ENCODE measurements at regions of chr17 and their contacts with region 1.

Region 1: GRCh38 chr17:30104575-30105339 is 11.9 kb upstream of the NSRP1 start:
- DNase-seq: peak; percentile 76
- ATAC-seq: peak; percentile 99
- H3K4me3 ChIP-seq: peak overlapping the region; percentile 47 to 57
- H3K27ac ChIP-seq: no peak overlapping the region
- H3K4me1 ChIP-seq: peaks cover 3 to 7% of the 10 kb centered on the region in 2 experiments; a peak in 2 of 4 replicates
- H3K27me3 ChIP-seq: no peaks in the 10 kb centered on the region
- CTCF ChIP-seq: peak; percentile 88 to 96 (median 93); a peak in 5 of 6 replicates
- POLR2A ChIP-seq: no peak
- RAD21 ChIP-seq: peak; percentile 90

Region 2: DNA sequence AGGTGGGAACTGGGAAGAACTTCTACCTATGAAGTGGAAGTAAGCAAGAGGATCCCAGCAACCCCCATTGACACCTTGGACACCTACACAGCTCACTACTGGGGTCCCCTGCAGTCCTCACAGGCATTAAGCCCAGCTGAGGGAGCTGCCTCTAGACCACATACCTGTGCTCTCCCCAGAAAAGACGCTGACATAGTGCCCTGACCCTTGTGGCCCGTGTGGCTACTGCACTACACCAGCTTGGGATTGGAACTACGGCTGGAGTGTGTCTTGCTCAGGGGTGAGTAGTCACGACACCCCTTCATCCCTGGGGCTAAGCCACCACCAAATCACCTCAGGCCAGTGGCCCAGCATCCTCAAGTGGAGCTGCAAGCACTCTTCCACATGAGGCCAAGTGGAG is 42.4 kb before region 1 on chr17:
- CTCF ChIA-PET with region 1: no interaction called
- POLR2A ChIA-PET with region 1: no interaction called
- RAD21 ChIA-PET with region 1: no interaction called
- intact Hi-C with region 1: no loop called
- DNase-seq: no peak
- ATAC-seq: no peak
- H3K4me3 ChIP-seq: no peak overlapping the region
- H3K27ac ChIP-seq: no peak overlapping the region
- H3K4me1 ChIP-seq: no peaks in the 10 kb centered on the region
- H3K27me3 ChIP-seq: no peaks in the 10 kb centered on the region
- CTCF ChIP-seq: no peak
- POLR2A ChIP-seq: no peak
- RAD21 ChIP-seq: no peak

Region 3: GRCh38 chr17:30093463-30094147 is 11.2 kb before region 1 on chr17:
- CTCF ChIA-PET with region 1: interaction called, 42 read pairs
- POLR2A ChIA-PET with region 1: interaction called, 4 read pairs
- RAD21 ChIA-PET with region 1: no interaction called
- intact Hi-C with region 1: no loop called
- DNase-seq: peak; percentile 54
- ATAC-seq: peak; percentile 86
- H3K4me3 ChIP-seq: no peak overlapping the region
- H3K27ac ChIP-seq: no peak overlapping the region
- H3K4me1 ChIP-seq: peaks cover 0 to 32% of the 10 kb centered on the region in 2 experiments; a peak in 2 of 4 replicates
- H3K27me3 ChIP-seq: no peaks in the 10 kb centered on the region
- CTCF ChIP-seq: peak; percentile 62 to 91 (median 85)
- POLR2A ChIP-seq: no peak
- RAD21 ChIP-seq: peak; percentile 93

Region 4: DNA sequence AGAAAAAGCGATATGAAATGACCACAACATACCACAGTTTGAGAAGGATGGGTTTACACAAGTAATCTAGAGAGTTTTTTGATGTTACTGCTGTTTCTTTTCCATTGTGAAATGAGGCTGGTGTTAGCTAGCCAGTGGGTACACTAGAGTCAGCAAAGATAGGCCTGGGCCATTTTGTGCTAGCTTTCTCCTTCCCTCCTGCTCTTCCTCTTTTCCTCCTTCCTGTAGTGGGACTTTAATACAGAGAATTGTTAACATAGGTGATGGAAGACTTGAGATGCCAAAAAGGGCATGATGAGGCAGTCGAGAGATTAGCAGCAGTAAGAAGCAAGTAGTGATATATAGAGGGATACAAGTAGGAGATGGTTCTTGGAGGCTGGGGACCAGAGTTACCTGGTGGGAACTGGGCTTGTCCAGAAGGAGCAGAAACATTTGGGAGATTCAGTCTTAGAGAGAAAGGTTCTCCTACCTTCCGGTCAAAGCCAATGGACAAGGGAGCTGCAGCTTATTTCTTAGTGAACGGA is 19.6 kb after region 1 on chr17:
- CTCF ChIA-PET with region 1: interaction called, 19 read pairs
- POLR2A ChIA-PET with region 1: no interaction called
- RAD21 ChIA-PET with region 1: interaction called in 1 of 2 experiments, 6 read pairs
- intact Hi-C with region 1: no loop called
- DNase-seq: no peak
- ATAC-seq: no peak
- H3K4me3 ChIP-seq: no peak overlapping the region
- H3K27ac ChIP-seq: no peak overlapping the region; the same call in 1 of the 2 replicates
- H3K4me1 ChIP-seq: no peaks in the 10 kb centered on the region
- H3K27me3 ChIP-seq: no peaks in the 10 kb centered on the region
- CTCF ChIP-seq: no peak
- POLR2A ChIP-seq: no peak
- RAD21 ChIP-seq: no peak

Region 5: DNA sequence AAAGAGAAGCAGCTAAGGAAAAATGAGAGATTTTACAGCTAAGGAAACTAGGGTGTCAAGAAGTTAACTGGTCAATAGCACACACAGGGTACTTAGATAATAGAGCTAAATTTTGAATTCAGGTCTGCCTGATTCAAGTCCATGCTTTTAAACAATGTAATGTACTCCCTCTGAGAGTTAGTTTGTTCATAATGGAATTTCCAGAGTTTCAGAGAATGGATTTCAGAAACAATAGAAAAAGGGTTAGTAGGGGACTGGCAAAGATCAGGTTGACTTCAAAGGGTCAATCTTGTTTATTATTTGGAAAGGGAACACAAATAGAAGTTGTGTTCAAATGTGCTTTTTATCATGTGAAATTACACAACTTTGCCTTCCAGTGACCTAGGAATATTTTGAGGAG is 29.8 kb after region 1 on chr17:
- CTCF ChIA-PET with region 1: no interaction called
- POLR2A ChIA-PET with region 1: no interaction called
- RAD21 ChIA-PET with region 1: no interaction called
- intact Hi-C with region 1: no loop called
- DNase-seq: no peak
- ATAC-seq: no peak
- H3K4me3 ChIP-seq: no peak overlapping the region
- H3K27ac ChIP-seq: no peak overlapping the region
- H3K4me1 ChIP-seq: no peaks in the 10 kb centered on the region
- H3K27me3 ChIP-seq: no peaks in the 10 kb centered on the region
- CTCF ChIP-seq: no peak
- POLR2A ChIP-seq: no peak
- RAD21 ChIP-seq: no peak

Region 6: DNA sequence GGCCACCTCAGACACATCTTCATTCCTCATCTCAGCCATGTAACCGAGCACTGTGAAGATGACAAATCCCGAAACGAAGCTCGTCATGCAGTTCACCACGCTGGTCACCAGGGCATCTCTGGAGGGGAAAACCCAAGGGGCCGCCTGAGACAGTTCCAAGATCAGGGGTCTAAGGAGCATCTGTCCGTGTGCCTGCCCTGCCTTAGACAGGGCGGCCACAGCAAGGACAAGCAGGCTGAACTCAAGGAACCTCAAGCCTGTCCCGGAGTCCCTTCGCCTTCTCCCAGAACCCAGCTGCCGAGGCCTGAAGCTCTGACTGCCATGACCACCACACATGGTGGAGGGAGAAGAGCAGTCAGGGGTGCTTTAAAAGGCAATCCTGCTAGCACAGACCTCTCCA is 108.0 kb after region 1 on chr17:
- CTCF ChIA-PET with region 1: no interaction called
- POLR2A ChIA-PET with region 1: no interaction called
- RAD21 ChIA-PET with region 1: no interaction called
- intact Hi-C with region 1: no loop called
- DNase-seq: no peak
- ATAC-seq: peak; percentile 46; the same call in 1 of the 2 replicates
- H3K4me3 ChIP-seq: no peak overlapping the region
- H3K27ac ChIP-seq: no peak overlapping the region
- H3K4me1 ChIP-seq: no peaks in the 10 kb centered on the region
- H3K27me3 ChIP-seq: no peaks in the 10 kb centered on the region
- CTCF ChIP-seq: no peak; a peak in 1 of 6 replicates
- POLR2A ChIP-seq: no peak
- RAD21 ChIP-seq: no peak

Region 7: DNA sequence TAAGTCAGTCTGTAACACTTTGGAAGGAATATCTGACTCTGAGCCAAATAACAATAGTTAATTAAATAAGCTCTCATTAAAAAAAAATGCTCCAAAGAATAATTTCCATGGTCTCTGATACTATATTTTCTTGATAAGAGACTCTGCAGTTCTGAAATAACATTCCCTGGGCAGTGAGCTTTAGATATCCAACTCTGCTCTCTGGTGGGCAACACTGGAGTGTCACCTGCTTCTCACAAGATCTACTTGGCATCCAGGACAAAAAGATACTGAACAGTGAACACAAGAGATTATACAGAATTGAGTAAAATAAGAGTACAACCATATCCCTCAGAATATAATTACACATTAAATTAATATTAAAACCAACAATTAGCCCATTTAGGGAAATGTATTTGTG is 173.3 kb after region 1 on chr17:
- CTCF ChIA-PET with region 1: interaction called, 22 read pairs
- POLR2A ChIA-PET with region 1: interaction called, 4 read pairs
- RAD21 ChIA-PET with region 1: interaction called, 4 read pairs
- intact Hi-C with region 1: loop called (anchors 1 kb)
- DNase-seq: no peak
- ATAC-seq: peak; percentile 58; the same call in 1 of the 2 replicates
- H3K4me3 ChIP-seq: no peak overlapping the region
- H3K27ac ChIP-seq: no peak overlapping the region
- H3K4me1 ChIP-seq: no peaks in the 10 kb centered on the region
- H3K27me3 ChIP-seq: no peaks in the 10 kb centered on the region
- CTCF ChIP-seq: peak; percentile 27 to 49 (median 40); a peak in 3 of 6 replicates
- POLR2A ChIP-seq: no peak
- RAD21 ChIP-seq: peak; percentile 51

Region 8: GRCh38 chr17:30554839-30555751 is 450.3 kb after region 1 on chr17:
- CTCF ChIA-PET with region 1: no interaction called
- POLR2A ChIA-PET with region 1: no interaction called
- RAD21 ChIA-PET with region 1: no interaction called
- intact Hi-C with region 1: loop called (anchors 5 kb)
- DNase-seq: peak; percentile 10
- ATAC-seq: peak; percentile 78
- H3K4me3 ChIP-seq: no peak overlapping the region
- H3K27ac ChIP-seq: no peak overlapping the region; the same call in 1 of the 2 replicates
- H3K4me1 ChIP-seq: peaks cover 12 to 20% of the 10 kb centered on the region in 2 experiments
- H3K27me3 ChIP-seq: no peaks in the 10 kb centered on the region
- CTCF ChIP-seq: peak; percentile 40 to 76 (median 42); a peak in 5 of 6 replicates
- POLR2A ChIP-seq: no peak
- RAD21 ChIP-seq: peak; percentile 76